OCI-LY7 (cell line): ENCODE measurements at regions of chr7 and their contacts with region 1.

Region 1: DNA sequence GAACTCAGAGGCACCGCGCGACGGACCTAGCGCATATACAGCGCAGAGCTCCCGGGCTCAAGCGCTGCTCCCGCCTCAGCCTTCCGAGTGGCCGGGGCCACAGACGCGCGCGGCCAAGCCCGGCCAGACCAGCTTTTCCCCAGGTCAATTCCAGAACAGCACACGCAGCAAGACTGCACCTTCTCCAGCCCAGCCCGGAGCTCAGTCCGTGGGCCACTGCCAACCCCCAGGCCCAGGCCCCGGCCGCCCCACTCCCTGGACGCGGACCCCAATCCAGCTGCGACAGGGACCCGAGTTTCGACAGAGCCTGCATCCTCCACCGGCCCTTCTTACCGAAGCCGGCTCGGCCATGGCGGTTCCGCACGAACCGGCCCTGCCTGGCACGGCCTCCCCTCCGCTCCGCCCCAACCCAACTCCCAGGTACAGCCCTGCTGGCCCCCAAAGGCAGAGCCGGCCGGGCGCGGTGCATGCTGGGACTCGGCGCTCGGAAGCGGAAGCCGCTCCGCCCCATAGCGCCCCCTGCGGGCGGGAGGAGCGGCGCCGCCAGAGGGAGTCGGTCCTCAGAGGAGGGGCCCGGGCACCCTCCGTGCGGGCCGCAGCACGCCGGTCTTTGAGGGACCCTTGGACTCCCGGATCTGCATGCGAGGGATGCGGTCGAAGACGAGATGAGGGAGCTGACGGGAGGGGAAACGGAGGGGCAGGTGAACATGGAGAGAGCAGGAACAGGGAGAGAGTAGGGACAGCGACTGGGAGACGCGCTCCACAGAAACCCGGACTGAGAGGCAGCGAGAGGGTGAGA is at the start of gene ZNF425:
- DNase-seq: peak; percentile 95
- H3K4me3 ChIP-seq: peak within 1 kb of the TSS; percentile 84
- H3K27ac ChIP-seq: peak within 1 kb of the TSS; percentile 70
- H3K4me1 ChIP-seq: peaks cover 13% of the 10 kb centered on the region
- CTCF ChIP-seq: peak; percentile 87
- total RNA-seq, gene ZNF425: 0.28 and 1.4 TPM in 2 replicates

Region 2: DNA sequence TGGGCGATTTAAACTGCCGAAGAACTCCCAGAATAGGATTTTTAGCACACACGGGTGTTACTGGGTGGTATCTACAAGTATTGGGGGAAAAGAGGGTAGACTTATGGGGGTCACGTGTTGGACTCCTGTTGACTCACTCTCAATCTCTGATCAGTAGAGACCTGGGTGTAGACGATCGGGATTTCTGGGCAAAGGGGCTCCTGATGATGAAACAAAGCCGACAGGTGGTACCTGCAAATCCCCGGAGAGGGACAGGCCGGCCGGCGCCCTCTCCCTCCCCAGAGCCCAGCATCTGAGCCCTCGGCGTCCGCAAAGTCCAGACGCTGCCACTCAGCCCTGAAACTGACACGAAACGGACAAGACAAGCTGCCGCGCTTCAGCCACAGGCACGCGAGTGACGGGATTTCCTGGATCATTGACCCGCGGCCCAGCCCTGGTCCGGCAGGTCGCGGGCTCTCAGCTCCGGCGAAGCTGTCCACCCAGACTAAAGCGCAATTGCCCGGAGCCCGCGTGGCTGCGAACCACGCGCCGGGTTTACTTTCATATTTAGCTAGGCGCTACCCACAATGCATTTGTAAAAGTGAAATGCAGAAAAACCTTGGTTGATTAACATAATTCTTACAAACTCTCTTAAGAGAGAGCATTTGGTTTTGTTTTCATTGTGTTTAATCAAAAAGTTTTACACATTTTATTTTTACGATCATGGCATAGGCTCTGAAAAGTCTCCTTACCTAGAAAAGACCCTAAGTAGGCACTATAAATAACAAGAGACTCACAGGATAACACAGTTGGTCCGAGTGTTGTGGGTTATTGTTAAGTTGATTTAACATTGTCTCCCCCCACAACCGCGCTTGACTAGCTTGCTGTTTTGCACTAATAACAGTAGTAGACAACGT is 185.1 kb before region 1 on chr7:
- CTCF ChIA-PET with region 1: no interaction called
- POLR2A ChIA-PET with region 1: no interaction called
- intact Hi-C with region 1: no loop called
- DNase-seq: peak; percentile 87
- H3K4me3 ChIP-seq: peak overlapping the region; percentile 82
- H3K27ac ChIP-seq: peak overlapping the region; percentile 51
- H3K4me1 ChIP-seq: peaks cover 13% of the 10 kb centered on the region
- CTCF ChIP-seq: no peak

Region 3: GRCh38 chr7:148987010-148987750 is 138.9 kb before region 1 on chr7:
- CTCF ChIA-PET with region 1: no interaction called
- POLR2A ChIA-PET with region 1: interaction called, 3 read pairs
- intact Hi-C with region 1: loop called (anchors 2 kb)
- DNase-seq: peak; percentile 94
- H3K4me3 ChIP-seq: peak overlapping the region; percentile 87
- H3K27ac ChIP-seq: peak overlapping the region; percentile 46
- H3K4me1 ChIP-seq: peaks cover 22% of the 10 kb centered on the region
- CTCF ChIP-seq: no peak

Region 4: DNA sequence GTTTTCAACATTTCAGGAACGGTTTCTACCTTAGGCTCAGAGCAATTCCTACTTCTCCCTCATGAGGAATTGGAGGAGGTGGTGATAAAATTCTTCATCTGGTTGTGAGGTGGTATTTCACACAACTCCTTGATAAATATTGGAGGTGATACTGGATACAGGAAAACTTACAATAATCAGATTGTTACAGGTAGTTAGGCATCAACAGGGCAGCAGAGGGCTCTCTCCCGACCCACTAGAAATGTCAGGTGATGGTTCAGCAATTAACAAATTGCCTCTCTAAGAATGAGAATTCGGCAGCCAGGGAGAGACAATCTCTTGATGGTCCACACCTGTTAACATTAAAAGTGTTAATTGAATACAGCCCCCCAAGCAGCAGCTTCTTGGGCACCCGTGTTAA is 58.2 kb before region 1 on chr7:
- CTCF ChIA-PET with region 1: no interaction called
- POLR2A ChIA-PET with region 1: no interaction called
- intact Hi-C with region 1: loop called (anchors 2 kb)
- DNase-seq: peak; percentile 39
- H3K4me3 ChIP-seq: no peak overlapping the region
- H3K27ac ChIP-seq: no peak overlapping the region
- H3K4me1 ChIP-seq: peaks cover 9% of the 10 kb centered on the region
- CTCF ChIP-seq: peak; percentile 69

Region 5: GRCh38 chr7:149081914-149082313 is 44.1 kb before region 1 on chr7:
- CTCF ChIA-PET with region 1: no interaction called
- POLR2A ChIA-PET with region 1: no interaction called
- intact Hi-C with region 1: no loop called
- DNase-seq: no peak
- H3K4me3 ChIP-seq: no peak overlapping the region
- H3K27ac ChIP-seq: no peak overlapping the region
- H3K4me1 ChIP-seq: no peaks in the 10 kb centered on the region
- CTCF ChIP-seq: no peak

Region 6: GRCh38 chr7:149460493-149461277 is 334.6 kb after region 1 on chr7 and contains the start of gene ZNF777:
- CTCF ChIA-PET with region 1: no interaction called
- POLR2A ChIA-PET with region 1: no interaction called
- intact Hi-C with region 1: loop called (anchors 2 kb)
- DNase-seq: peak; percentile 87
- H3K4me3 ChIP-seq: peak within 1 kb of the TSS; percentile 71
- H3K27ac ChIP-seq: no peak within 1 kb of the TSS
- H3K4me1 ChIP-seq: peaks cover 17% of the 10 kb centered on the region
- CTCF ChIP-seq: peak; percentile 70
- total RNA-seq, gene ZNF777: 5.2 and 6.2 TPM in 2 replicates